Activated CD4-positive, alpha-beta T cell treated with anti-CD3 and anti-CD28 coated beads, Interleukin-2, amount 10 ng/mL, durations not matched to agents 7 days and 5 days (primary cell): ENCODE measurements at regions of chr2 and their contacts with region 1.

Region 1: DNA sequence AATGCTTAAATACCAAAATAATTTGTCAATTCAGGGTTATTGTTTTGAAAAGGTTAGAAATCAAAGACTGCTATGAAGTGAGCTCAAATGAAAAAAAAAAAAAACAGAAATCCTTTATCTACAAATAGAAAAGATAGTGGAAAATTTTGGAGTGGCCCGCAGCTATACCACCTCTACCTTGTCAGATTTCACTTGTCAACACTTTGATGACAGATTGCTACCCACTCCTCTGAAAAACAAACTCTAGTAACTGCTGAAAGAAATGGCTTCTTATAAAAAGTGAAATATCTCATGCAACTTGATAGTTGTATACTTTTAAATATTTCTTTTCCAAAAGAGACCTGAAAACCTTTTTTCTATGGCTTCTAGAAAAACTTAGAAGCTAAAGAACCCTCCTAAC is 84.5 kb downstream of the WDPCP start:
- DNase-seq: no peak
- H3K4me3 Mint-ChIP-seq: no peak overlapping the region
- H3K27ac Mint-ChIP-seq: no peak overlapping the region
- H3K4me1 Mint-ChIP-seq: peaks cover 9% of the 10 kb centered on the region
- H3K27me3 Mint-ChIP-seq: no peaks in the 10 kb centered on the region

Region 2: GRCh38 chr2:63124850-63125249 is 379.0 kb before region 1 on chr2:
- CTCF ChIA-PET with region 1: no interaction called
- POLR2A ChIA-PET with region 1: interaction called, 11 read pairs
- DNase-seq: no peak
- H3K4me3 Mint-ChIP-seq: no peak overlapping the region
- H3K27ac Mint-ChIP-seq: no peak overlapping the region
- H3K4me1 Mint-ChIP-seq: no peaks in the 10 kb centered on the region
- H3K27me3 Mint-ChIP-seq: no peaks in the 10 kb centered on the region

Region 3: GRCh38 chr2:63465633-63466032 is 38.2 kb before region 1 on chr2:
- CTCF ChIA-PET with region 1: no interaction called
- POLR2A ChIA-PET with region 1: no interaction called
- DNase-seq: no peak
- H3K4me3 Mint-ChIP-seq: no peak overlapping the region
- H3K27ac Mint-ChIP-seq: no peak overlapping the region
- H3K4me1 Mint-ChIP-seq: no peaks in the 10 kb centered on the region
- H3K27me3 Mint-ChIP-seq: no peaks in the 10 kb centered on the region